CD8-positive, alpha-beta T cell (primary cell): ENCODE measurements at regions of chr1 and their contacts with region 1.

Region 1: DNA sequence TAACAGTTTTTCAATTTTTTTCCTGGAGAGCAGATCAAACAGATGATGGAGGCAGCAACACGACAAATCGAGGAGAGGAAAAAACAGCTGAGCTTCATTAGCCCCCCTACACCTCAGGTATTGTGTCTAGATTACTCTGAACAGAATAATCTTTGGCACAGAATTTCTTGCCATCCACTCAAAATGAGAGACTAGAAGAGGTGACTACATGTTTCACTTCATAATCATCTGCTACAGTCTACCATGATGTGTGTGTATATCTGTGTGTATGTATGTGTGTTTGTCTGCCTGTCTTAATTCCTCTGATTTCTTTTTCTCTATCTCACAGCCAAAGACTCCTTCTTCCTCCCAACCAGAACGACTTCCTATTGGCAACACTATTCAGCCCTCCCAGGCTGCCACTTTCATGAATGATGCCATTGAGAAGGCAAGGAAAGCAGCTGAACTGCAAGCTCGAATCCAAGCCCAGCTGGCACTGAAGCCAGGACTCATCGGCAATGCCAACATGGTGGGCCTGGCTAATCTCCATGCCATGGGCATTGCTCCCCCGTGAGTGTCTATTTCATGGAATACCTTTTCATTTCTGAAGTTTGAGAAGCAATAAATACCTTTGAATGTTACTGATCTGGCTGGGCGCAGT is 11.4 kb downstream of the PRPF3 start:
- DNase-seq: no peak
- ATAC-seq: no peak
- H3K4me3 ChIP-seq: no peak overlapping the region
- H3K4me3 Mint-ChIP-seq: no peak overlapping the region
- H3K27ac ChIP-seq: no peak overlapping the region
- H3K27ac Mint-ChIP-seq: no peak overlapping the region
- H3K4me1 ChIP-seq: no peaks in the 10 kb centered on the region
- H3K4me1 Mint-ChIP-seq: peaks cover 7% of the 10 kb centered on the region
- H3K27me3 ChIP-seq: no peaks in the 10 kb centered on the region
- H3K27me3 Mint-ChIP-seq: no peaks in the 10 kb centered on the region
- CTCF ChIP-seq: no peak

Region 2: DNA sequence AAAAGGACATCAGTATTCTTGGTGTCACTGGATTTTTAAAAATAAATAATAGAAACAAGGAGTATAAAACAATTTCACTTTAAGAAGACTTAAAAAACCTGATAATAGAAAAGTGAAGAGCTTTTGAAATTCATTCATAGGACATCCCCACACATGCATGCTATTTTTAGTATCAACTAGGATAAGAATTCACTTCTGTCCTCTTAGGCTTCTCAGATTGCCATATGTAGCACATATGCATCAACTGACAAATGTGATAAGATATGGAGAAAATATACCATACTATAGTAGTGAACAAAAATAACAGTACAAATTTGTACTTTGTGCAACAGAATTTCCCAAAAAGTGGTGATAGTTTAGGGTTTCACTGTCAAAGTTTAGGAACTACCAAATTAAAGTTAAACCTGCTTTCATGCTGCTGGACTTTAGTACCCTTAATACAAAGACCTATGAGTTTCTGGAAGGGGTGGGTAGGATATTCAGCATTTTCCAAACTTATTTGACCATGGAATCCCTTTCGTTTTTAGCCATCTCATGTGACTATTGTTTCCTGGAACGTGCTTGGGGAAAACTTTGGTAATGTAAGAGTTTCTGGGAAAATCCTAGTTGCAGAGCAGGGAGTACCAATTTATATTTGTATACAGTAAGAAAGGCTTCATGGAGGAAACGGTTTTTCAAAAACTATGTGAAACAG is 51.0 kb after region 1 on chr1:
- CTCF ChIA-PET with region 1: no interaction called
- POLR2A ChIA-PET with region 1: no interaction called
- intact Hi-C with region 1: loop called in 1 of 2 experiments (anchors 1 kb)
- DNase-seq: no peak
- ATAC-seq: no peak
- H3K4me3 ChIP-seq: no peak overlapping the region
- H3K4me3 Mint-ChIP-seq: no peak overlapping the region
- H3K27ac ChIP-seq: no peak overlapping the region
- H3K27ac Mint-ChIP-seq: peak overlapping the region; percentile 41
- H3K4me1 ChIP-seq: peaks cover 8% of the 10 kb centered on the region
- H3K4me1 Mint-ChIP-seq: peaks cover 48% of the 10 kb centered on the region
- H3K27me3 ChIP-seq: no peaks in the 10 kb centered on the region
- H3K27me3 Mint-ChIP-seq: no peaks in the 10 kb centered on the region
- CTCF ChIP-seq: no peak